A673 (cell line): ENCODE measurements at regions of chr17 and their contacts with region 1.

Region 1: DNA sequence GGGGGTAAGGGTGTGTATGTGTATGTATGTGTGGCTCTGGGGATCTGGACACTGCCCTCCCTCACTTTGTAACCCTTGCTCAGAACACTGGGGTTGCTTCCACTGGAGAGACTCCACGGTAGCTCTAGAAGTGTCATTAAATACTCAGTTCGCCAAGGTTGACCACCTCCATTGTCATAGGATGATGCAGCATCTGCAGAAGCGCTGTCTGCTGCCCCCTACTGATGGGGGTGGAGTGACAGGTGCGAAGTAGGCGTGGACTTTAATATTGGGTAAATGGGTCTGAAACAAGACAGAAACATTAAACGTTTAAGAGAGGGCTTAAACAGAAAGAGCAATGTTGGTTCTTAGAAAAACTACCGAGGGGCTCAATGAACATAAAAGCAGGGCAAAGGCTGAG is 35.5 kb upstream of the STAC2 start:
- DNase-seq: peak; percentile 19
- H3K4me3 ChIP-seq: no peak overlapping the region
- H3K27ac ChIP-seq: no peak overlapping the region
- H3K4me1 ChIP-seq: no peaks in the 10 kb centered on the region
- H3K27me3 ChIP-seq: no peaks in the 10 kb centered on the region
- CTCF ChIP-seq: 0 out of 2 replicates have a peak, but pooled peaks have one; percentile 40

Region 2: DNA sequence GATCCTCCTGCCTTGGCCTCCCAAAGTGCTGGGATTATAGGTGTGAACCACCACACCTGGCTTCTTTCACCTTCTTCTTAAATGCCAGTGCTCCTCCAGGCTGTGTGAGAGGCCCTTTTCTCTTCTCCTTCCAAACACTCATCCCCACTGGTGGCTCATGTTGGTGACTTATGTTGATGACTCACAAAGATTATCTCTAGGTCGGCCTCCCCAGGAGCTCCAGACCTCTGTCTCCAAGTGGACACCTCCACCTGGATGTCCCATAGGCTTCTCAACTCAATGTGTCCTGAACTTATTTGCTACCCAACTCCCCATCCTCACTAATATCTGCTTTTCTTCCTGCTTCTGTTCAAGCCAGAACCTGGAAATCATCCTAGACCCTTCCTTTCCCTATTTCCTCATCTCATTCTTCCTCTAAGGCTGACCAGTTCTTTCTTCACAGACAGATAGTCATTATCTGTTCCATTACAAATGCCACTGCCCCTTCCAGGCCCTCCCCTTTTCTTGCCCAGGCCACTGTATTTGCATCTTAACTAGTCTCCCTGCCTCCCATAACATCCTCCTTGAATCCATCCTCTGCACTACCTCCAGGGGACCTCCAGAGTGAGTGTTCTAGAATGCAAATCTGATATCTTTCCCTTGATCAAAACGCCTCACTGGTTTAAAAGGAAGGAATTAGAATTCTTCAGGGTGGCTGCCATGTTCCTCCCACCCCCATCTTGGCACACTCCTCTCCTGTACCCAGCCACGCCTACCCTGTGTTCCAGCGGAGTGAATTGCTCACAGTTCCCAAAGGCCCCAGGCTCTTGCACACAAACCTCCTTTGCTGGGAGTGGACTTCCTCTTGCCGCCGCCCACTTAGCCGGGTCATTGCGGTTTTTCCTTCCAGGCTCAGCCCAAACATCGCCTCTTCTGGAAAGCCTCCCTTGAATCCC is 259.3 kb before region 1 on chr17:
- CTCF ChIA-PET with region 1: no interaction called
- POLR2A ChIA-PET with region 1: no interaction called
- intact Hi-C with region 1: no loop called
- DNase-seq: peak; percentile 19
- H3K4me3 ChIP-seq: no peak overlapping the region
- H3K27ac ChIP-seq: no peak overlapping the region
- H3K4me1 ChIP-seq: no peaks in the 10 kb centered on the region
- H3K27me3 ChIP-seq: no peaks in the 10 kb centered on the region
- CTCF ChIP-seq: no peak

Region 3: GRCh38 chr17:39352511-39352910 is 91.2 kb after region 1 on chr17:
- CTCF ChIA-PET with region 1: no interaction called
- POLR2A ChIA-PET with region 1: no interaction called
- intact Hi-C with region 1: loop called (anchors 10 kb)
- DNase-seq: no peak
- H3K4me3 ChIP-seq: no peak overlapping the region
- H3K27ac ChIP-seq: no peak overlapping the region
- H3K4me1 ChIP-seq: no peaks in the 10 kb centered on the region
- H3K27me3 ChIP-seq: no peaks in the 10 kb centered on the region
- CTCF ChIP-seq: no peak